Mammary epithelial cell (primary cell): ENCODE measurements at regions of chr3 and their contacts with region 1.

Region 1: DNA sequence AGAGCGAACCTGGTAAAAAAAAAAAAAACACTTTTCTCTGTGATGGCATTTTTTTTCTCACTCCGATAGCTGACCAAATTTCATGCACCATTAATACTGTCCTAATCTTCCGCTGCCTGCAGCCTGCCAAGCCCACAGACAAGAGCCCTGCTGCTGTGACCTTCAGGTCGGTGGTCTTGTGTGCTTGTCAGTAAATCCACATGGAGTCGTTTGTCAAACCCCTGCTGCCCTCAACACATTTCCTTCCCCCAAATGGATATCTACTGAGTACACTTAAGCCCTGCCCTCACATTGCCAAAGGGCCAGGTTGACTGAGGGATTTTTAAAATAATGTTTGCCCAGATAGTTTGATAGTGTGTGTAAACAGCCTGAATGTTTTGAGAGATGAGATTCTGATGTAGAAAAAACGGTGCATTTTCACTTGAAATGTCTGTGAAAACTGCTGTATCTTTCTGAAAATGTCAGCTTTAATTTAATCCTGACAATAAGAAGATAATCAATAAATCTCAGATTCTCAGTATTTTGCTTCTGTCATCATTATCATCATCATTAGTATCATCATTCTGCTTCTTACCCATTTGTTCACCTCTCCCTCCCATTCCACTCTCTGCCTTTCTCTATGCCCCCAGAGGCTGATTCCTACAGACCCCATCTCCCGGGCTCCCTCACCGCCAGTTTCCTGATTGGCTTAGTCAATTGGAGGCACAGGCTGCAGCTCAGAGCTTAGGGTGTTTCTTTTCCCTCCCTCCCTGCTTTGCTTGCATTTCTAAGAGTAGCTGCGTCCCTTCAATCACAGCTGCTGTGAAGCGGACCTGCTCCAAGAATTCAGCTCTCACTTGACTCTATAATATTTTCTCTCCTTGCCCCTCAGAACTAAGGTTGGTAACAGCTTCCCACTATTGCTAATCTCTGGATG is 8.3 kb upstream of the SNTN start:
- DNase-seq: no peak
- H3K4me3 ChIP-seq: no peak overlapping the region
- H3K27ac ChIP-seq: no peak overlapping the region
- H3K4me1 ChIP-seq: no peaks in the 10 kb centered on the region
- H3K27me3 ChIP-seq: no peaks in the 10 kb centered on the region
- CTCF ChIP-seq: no peak

Region 2: GRCh38 chr3:63607716-63608115 is 36.4 kb before region 1 on chr3:
- CTCF ChIA-PET with region 1: no interaction called
- dilution Hi-C with region 1: loop called (anchors 5 kb)
- in situ Hi-C with region 1: no loop called
- intact Hi-C with region 1: no loop called
- DNase-seq: no peak
- H3K4me3 ChIP-seq: no peak overlapping the region
- H3K27ac ChIP-seq: no peak overlapping the region
- H3K4me1 ChIP-seq: no peaks in the 10 kb centered on the region
- H3K27me3 ChIP-seq: no peaks in the 10 kb centered on the region
- CTCF ChIP-seq: no peak